AG04450 (cell line): ENCODE measurements at regions of chr6 and their contacts with region 1.

Region 1: DNA sequence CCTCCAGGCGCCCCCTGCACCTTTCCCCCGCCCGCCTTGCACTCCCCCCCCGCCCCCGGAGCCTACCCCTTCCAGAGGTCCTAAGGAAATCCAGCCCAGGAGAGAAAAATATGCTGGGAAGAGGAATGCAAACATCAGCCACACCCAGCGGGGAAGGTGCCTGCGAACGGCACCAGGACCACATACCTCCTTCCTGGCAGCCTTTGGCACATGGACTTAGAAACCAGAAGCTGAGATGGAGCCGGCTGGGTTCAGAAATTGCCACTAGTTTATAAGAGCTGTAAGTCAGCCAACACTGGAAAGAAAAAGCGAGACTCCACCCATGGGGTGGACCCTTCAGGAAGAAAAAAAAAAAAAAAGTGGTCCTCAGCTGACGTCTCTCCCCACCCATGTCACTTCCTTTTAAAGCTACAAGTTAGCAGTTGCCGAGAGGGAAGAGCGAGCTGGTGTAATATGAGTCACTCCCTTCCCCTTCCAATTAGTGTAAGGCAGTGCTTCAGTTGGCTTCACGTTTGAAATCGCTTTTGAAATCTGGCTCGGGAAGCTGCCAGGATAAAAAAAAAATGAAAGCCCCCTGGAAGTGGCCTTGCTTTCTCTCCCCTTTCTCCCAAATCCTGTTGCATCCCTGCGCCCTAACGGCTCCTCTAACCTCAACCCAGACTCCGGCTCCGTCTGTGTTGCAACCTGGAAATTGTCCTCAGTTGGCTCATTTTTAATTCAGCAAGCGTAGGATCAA is at the start of gene AGPAT4:
- DNase-seq: peak; percentile 95
- H3K4me3 ChIP-seq: peak within 1 kb of the TSS; percentile 84
- H3K27ac ChIP-seq: peak within 1 kb of the TSS; percentile 80
- H3K27me3 ChIP-seq: no peaks in the 10 kb centered on the region
- CTCF ChIP-seq: no peak
- polyA plus RNA-seq, gene AGPAT4: 7.8 and 10.0 TPM in 2 replicates

Region 2: GRCh38 chr6:161215193-161215592 is 58.7 kb before region 1 on chr6:
- CTCF ChIA-PET with region 1: interaction called, 3 read pairs
- POLR2A ChIA-PET with region 1: interaction called, 11 read pairs
- DNase-seq: peak; percentile 99
- H3K4me3 ChIP-seq: no peak overlapping the region
- H3K27ac ChIP-seq: peak overlapping the region; percentile 89
- H3K27me3 ChIP-seq: no peaks in the 10 kb centered on the region
- CTCF ChIP-seq: no peak

Region 3: DNA sequence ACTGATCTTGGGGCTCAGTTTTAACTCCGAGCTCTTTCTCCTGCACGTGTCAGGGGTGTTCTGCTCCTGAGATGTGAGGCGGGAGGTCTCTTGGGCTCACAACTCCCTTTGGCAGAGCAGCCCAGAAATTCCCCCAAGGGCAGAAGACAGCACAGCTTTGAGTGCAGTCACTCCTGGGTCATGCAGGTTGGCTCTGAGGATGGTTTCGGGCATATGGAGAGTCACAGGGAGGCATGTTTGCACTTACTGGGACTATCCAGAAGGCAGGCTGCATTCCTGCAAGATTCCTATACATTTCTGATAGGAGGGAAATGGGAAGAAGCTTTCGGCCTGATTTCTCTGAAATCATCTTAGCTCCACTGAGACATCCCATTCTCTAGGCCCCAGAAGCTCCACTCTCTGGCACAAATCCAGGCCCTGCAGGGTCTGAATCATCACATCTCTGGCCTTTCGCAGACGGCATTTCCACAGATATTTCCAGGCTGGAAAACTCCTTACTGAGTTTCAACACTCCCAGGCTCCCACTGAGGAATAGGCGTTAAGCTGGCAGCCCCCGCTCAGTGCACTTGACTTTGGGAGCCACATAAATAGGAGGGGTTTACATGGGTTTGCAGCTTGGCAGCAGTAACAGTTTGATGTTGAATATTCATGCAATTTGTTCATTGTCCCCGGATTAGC is 39.8 kb before region 1 on chr6:
- CTCF ChIA-PET with region 1: no interaction called
- POLR2A ChIA-PET with region 1: interaction called, 11 read pairs
- DNase-seq: peak; percentile 83
- H3K4me3 ChIP-seq: no peak overlapping the region
- H3K27ac ChIP-seq: no peak overlapping the region
- H3K27me3 ChIP-seq: no peaks in the 10 kb centered on the region
- CTCF ChIP-seq: no peak

Region 4: DNA sequence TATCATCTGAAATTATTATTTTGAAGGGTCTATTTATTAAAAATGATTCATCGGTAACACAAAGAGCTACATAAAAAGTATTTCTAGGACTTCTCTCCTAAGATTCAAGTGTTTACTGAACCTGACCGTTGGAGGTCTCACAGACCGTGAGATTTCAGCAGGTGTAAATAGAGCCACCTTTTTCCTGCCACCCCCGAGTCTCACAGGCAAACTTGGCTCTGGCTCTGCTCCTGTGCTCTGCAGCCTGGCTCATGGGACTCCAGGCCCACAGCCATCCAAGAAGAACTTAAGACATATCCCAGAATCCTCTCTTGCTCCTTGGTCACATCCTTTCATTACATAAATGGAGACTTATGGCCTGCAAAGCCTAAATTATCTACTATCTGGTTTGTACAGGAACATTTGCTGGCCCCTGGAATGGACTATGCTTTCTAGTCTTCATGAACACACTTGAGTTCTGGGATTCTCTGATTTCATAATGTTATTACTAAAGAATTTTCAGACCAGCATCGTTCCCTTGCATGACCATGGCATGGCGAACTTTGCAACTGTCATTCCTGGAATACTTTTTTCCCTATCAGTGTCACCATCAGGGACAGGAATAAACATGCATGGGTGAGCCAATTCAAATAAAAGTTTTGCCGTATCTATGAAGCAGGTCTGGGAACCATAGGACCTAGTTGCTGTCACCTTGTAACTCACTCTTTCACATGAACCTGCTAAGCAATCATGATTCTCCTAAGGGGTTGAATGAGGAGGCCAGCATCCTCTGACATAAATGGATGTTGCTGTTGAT is 67.9 kb after region 1 on chr6:
- CTCF ChIA-PET with region 1: no interaction called
- POLR2A ChIA-PET with region 1: no interaction called
- DNase-seq: no peak
- H3K4me3 ChIP-seq: no peak overlapping the region
- H3K27ac ChIP-seq: no peak overlapping the region
- H3K27me3 ChIP-seq: no peaks in the 10 kb centered on the region
- CTCF ChIP-seq: no peak